GM10248 (cell line): ENCODE measurements at regions of chr5 and their contacts with region 1.

Region 1: GRCh38 chr5:158074992-158075769 is 216.2 kb upstream of the CLINT1 start:
- DNase-seq: peak; percentile 52
- CTCF ChIP-seq: peak; percentile 81

Region 2: GRCh38 chr5:158056130-158056825 is 18.9 kb before region 1 on chr5:
- CTCF ChIA-PET with region 1: interaction called, 100 read pairs
- POLR2A ChIA-PET with region 1: no interaction called
- DNase-seq: no peak
- CTCF ChIP-seq: no peak

Region 3: DNA sequence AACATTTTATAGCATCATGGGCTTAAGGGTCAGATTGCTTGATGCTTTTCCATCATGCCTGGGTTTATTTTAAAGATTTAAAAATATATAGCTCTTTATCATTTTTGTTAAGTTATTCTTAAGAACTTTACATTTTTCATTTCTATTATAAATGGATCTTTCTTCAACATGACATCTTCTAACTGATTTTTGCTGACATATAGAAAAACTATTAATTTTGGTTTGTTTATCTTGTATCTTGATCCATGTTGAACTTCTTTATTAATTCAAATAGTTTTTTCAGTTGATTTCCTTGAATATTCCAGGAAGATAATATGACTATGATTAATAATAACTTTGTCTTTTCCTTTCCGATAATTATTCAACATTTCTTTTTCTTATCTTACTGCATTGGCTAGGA is 21.7 kb after region 1 on chr5:
- CTCF ChIA-PET with region 1: interaction called, 10 read pairs
- POLR2A ChIA-PET with region 1: no interaction called
- DNase-seq: no peak
- CTCF ChIP-seq: no peak

Region 4: DNA sequence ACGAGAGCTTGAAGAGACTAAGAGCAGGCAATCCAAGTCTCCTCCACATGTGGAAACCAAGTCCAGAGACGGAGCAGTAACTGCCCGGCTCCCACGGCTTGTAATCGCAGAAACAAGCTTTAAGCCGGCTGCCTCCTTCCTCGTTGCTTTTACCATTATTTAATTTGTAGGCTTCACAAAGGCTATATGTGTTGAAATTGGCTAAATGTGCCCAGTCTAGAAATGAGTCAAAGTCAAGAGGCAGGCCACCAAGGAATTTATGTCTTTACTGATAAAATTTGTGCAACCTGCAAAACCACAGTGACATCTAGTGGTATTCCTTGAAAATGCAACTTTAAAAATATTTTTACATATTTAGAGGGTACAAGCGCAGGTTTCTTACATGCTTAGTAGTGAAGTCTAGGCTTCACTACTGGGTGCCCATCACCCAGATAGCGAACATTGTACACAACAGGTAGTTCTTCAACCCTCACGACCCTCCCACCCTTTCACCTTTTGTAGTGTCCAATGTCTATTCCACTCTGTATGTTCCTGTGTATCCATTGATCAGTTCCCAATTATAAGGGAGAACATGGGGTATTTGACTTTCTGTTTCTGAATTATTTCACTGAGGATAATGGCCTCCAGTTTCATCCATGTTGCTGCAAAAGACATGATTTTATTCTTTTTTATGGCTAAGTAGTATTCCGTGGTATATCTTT is 1058.0 kb after region 1 on chr5:
- CTCF ChIA-PET with region 1: interaction called, 19 read pairs
- POLR2A ChIA-PET with region 1: no interaction called
- DNase-seq: peak; percentile 41
- CTCF ChIP-seq: peak; percentile 60